BJ (cell line): ENCODE measurements at regions of chr19 and their contacts with region 1.

Region 1: DNA sequence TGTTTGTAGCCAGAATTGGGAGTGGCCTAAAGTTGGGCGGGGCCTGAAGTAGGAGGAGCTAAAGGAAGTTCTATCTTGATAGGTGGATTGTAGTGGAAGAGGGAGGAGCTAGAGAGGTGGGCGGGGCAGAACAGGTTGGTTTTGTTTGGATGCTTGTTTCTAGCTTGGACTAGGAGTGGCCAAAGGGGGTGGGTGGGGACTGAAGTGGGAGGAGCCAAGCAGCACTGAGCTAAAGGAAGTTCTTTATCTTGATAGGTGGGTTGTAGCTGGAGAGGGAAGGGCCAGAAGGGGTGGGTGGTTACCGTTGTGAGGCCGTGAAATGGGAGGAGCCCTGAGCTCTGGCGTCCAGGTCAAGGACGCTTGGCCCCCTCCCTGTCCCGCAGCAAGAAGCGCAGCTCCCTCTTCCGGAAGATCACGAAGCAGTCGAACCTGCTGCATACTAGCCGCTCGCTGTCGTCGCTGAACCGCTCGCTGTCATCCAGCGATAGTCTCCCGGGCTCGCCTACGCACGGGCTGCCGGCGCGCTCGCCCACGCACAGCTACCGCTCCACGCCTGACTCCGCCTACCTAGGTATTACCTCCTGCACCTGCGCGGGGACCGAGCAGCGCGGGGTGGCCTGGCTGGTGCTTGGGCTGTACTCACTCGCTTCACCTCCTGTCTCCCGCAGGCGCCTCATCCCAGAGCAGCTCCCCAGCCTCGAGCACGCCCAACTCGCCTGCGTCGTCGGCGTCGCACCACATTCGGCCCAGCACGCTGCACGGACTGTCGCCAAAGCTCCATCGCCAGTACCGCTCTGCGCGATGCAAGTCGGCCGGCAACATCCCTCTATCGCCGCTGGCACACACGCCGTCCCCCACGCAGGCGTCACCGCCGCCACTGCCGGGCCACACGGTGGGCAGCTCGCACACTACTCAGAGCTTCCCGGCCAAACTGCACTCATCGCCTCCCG is 8.0 kb downstream of the DNASE2 start:
- DNase-seq: peak; percentile 22
- H3K4me3 ChIP-seq: peak overlapping the region; percentile 33
- H3K27me3 ChIP-seq: no peaks in the 10 kb centered on the region
- CTCF ChIP-seq: peak; percentile 24; the same call in 1 of the 2 replicates

Region 2: DNA sequence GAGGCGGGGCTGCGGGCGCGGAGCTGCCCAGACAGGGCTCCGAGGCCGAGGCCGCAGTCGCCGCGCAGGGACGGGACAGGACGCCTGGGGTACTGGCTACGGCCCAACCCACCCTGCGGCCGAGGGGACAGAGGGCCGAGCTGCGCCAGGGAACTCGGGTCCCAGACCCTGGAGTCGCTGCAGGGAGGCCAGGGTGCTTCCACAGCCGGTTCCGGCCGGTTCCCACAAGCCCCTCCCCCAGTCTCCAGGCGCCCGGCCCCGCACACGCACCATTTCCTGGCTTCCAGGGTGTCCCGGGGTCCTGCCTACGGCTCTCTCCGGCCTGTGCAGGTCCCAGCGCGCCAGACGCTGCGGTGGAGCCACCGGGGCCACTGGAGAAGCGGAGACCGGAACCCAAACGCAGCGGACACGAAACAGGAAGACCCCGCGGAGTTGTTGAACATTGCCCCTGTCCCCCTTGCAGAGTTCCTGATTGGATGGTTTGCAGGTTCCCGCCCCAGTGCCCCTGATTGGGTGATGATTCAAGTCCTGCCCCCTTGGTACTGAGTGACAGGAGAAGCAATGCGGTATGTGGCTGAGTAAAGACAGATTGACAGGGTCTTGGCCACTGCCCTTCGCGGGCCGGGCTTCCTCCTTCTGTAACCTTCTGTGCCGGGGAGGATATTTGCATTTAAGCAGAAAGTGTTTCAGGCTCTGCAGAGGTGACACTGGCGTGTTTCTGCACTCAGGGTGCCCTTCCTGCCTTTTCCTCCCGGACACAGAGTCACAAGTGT is 322.0 kb before region 1 on chr19 and contains the start of gene ZNF564:
- CTCF ChIA-PET with region 1: no interaction called
- POLR2A ChIA-PET with region 1: interaction called, 11 read pairs
- DNase-seq: peak; percentile 94
- H3K4me3 ChIP-seq: peak within 1 kb of the TSS; percentile 90
- H3K27me3 ChIP-seq: no peaks in the 10 kb centered on the region
- CTCF ChIP-seq: no peak
- polyA plus RNA-seq, gene ZNF564: 1.4 and 2.9 TPM in 2 replicates